Endothelial cell of umbilical vein (primary cell): ENCODE measurements at regions of chr6 and their contacts with region 1.

Region 1: GRCh38 chr6:130020907-130021629 is 2.7 kb downstream of the L3MBTL3 start:
- DNase-seq: peak; percentile 93
- H3K4me3 ChIP-seq: peak overlapping the region; percentile 80 to 87 (median 84)
- H3K27ac ChIP-seq: peak overlapping the region; percentile 79
- H3K4me1 ChIP-seq: peaks cover 17% of the 10 kb centered on the region
- H3K27me3 ChIP-seq: no peaks in the 10 kb centered on the region
- CTCF ChIP-seq: peak; percentile 80 to 82
- POLR2A ChIP-seq: no peak

Region 2: DNA sequence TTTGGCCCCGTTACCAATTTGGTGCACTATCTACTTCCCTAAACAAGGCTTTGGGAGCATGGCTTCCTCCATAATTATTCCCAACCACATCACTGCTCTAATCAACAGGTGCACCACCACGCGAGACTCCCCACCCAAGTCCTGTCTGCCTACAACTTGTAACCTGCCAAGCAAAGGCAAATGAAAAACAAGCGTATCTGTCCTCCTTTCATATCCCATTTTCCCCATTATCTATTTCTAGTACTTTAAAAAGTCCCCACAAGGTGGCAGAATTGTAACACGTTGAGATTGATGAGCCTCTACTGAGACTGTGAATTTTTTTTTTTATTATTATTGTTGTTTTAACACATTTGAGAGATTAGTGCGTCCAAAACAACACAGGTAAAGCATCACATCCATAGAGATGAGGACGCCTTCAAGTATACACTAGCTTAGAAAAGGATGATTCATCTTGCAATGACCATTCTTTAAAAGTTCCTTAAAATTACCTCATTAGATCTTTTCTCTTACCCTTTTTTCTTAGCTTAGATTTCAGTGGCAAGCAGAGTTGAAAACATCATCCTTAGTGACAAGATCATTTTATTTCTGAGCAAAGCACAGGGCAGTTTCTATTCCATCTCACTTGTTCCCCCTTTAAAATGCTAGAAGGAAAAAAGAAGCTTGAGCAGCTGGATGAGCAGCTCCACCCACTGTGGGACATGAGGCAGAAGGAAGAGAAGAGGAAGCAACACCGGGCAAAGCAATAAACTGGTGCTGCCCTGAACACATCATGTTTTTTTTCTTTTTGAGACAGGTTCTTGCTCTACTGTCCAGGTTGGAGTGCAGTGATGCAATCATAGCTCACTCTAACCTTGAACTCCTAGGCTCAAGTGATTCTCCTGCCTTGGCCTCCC is 521.9 kb before region 1 on chr6:
- CTCF ChIA-PET with region 1: interaction called, 29 read pairs
- POLR2A ChIA-PET with region 1: interaction called, 11 read pairs
- dilution Hi-C with region 1: no loop called
- intact Hi-C with region 1: loop called (anchors 2 kb)
- DNase-seq: peak; percentile 73
- H3K4me3 ChIP-seq: peak overlapping the region in 1 of 3 experiments; percentile 13
- H3K27ac ChIP-seq: no peak overlapping the region
- H3K4me1 ChIP-seq: peaks cover 34% of the 10 kb centered on the region
- H3K27me3 ChIP-seq: no peaks in the 10 kb centered on the region
- CTCF ChIP-seq: peak; percentile 21 to 36
- POLR2A ChIP-seq: no peak

Region 3: DNA sequence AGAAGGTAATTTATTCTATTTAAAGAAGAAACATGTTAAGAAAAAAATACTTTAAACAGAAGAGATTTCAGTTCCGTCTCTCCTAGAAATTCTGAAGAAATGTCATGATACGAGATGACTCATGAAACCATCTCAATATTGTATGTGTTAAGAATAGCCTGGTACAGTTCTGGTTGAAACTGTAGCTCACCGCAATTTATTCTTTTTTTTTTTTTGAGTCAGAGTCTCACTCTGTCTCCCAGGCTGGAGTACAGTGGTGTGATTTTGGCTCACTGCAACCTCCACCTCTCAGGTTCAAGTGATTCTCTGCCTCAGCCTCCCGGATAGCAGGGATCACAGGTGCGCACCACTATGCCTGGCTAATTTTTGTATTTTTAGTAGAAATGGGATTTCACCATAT is 414.4 kb before region 1 on chr6:
- CTCF ChIA-PET with region 1: interaction called, 10 read pairs
- POLR2A ChIA-PET with region 1: no interaction called
- dilution Hi-C with region 1: no loop called
- intact Hi-C with region 1: no loop called
- DNase-seq: no peak
- H3K4me3 ChIP-seq: no peak overlapping the region
- H3K27ac ChIP-seq: no peak overlapping the region
- H3K4me1 ChIP-seq: no peaks in the 10 kb centered on the region
- H3K27me3 ChIP-seq: no peaks in the 10 kb centered on the region
- CTCF ChIP-seq: no peak
- POLR2A ChIP-seq: no peak

Region 4: GRCh38 chr6:129683601-129684322 is 337.3 kb before region 1 on chr6:
- CTCF ChIA-PET with region 1: interaction called, 10 read pairs
- POLR2A ChIA-PET with region 1: no interaction called
- dilution Hi-C with region 1: no loop called
- intact Hi-C with region 1: no loop called
- DNase-seq: peak; percentile 97
- H3K4me3 ChIP-seq: peak overlapping the region in 1 of 3 experiments; percentile 6
- H3K27ac ChIP-seq: peak overlapping the region; percentile 98
- H3K4me1 ChIP-seq: peaks cover 77% of the 10 kb centered on the region
- H3K27me3 ChIP-seq: no peaks in the 10 kb centered on the region
- CTCF ChIP-seq: no peak
- POLR2A ChIP-seq: peak; percentile 82

Region 5: DNA sequence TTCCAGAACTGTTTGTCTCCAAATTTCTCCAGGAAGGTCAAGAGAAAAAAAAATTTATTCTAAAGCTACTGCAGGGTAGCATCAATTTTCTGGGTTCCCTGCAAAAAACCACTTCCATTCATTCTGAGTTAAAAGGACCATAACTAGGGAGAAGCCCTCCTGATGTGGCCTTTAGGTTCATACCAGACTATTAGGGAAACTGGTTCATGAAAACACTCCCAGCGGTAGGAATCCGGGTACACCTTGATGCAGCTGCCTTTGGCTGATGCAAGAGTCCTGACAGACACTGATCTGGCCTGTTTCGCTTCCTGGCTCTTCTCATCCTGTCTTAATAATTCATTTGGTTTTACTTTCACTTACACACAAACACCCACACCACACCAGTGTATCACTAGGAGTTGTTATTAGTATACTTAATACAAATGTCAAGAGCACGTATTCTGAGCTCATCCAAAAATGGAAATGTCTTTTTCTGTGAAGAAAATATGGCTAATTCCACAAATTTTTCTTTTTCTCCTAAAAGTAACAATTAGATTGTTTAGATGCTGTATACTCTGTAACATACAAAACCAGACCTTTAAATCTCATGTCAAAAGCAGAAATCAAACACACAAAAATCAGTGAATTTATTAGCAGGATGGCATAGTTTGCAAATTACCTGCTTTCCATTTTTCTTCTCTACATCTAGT is 272.7 kb before region 1 on chr6:
- CTCF ChIA-PET with region 1: interaction called, 9 read pairs
- POLR2A ChIA-PET with region 1: no interaction called
- dilution Hi-C with region 1: no loop called
- intact Hi-C with region 1: loop called (anchors 1 kb)
- DNase-seq: peak; percentile 28
- H3K4me3 ChIP-seq: no peak overlapping the region
- H3K27ac ChIP-seq: peak overlapping the region; percentile 80
- H3K4me1 ChIP-seq: peaks cover 53% of the 10 kb centered on the region
- H3K27me3 ChIP-seq: no peaks in the 10 kb centered on the region
- CTCF ChIP-seq: no peak
- POLR2A ChIP-seq: no peak

Region 6: DNA sequence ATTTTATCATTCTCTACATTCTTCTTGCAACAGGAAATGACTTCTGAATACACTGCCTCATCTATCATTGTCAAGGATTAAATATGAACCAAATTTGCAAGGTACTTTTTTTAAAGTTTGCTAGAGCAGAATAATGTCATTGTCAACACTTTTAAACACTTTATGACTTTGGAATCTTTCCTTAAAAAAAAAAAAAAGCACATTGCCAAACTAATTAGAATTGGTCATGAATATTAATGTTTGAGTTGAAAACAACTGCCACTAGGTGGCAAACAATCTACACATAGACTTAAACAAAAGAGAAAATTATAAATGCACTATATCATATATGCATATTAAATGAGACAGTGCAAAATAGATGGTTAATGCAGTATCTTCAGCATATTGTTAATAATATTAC is 127.4 kb before region 1 on chr6:
- CTCF ChIA-PET with region 1: interaction called, 21 read pairs
- POLR2A ChIA-PET with region 1: no interaction called
- dilution Hi-C with region 1: no loop called
- intact Hi-C with region 1: loop called (anchors 1 kb)
- DNase-seq: peak; percentile 58
- H3K4me3 ChIP-seq: no peak overlapping the region
- H3K27ac ChIP-seq: no peak overlapping the region
- H3K4me1 ChIP-seq: peaks cover 20% of the 10 kb centered on the region
- H3K27me3 ChIP-seq: no peaks in the 10 kb centered on the region
- CTCF ChIP-seq: peak; percentile 23 to 24
- POLR2A ChIP-seq: no peak

Region 7: GRCh38 chr6:129946439-129947145 is 74.5 kb before region 1 on chr6:
- CTCF ChIA-PET with region 1: interaction called, 11 read pairs
- POLR2A ChIA-PET with region 1: no interaction called
- dilution Hi-C with region 1: no loop called
- intact Hi-C with region 1: no loop called
- DNase-seq: no peak
- H3K4me3 ChIP-seq: no peak overlapping the region
- H3K27ac ChIP-seq: no peak overlapping the region
- H3K4me1 ChIP-seq: no peaks in the 10 kb centered on the region
- H3K27me3 ChIP-seq: no peaks in the 10 kb centered on the region
- CTCF ChIP-seq: no peak
- POLR2A ChIP-seq: no peak

Region 8: GRCh38 chr6:130307752-130308361 is 286.8 kb after region 1 on chr6:
- CTCF ChIA-PET with region 1: no interaction called
- POLR2A ChIA-PET with region 1: no interaction called
- dilution Hi-C with region 1: no loop called
- intact Hi-C with region 1: no loop called
- DNase-seq: no peak
- H3K4me3 ChIP-seq: no peak overlapping the region
- H3K27ac ChIP-seq: no peak overlapping the region
- H3K4me1 ChIP-seq: no peaks in the 10 kb centered on the region
- H3K27me3 ChIP-seq: no peaks in the 10 kb centered on the region
- CTCF ChIP-seq: no peak
- POLR2A ChIP-seq: no peak

Region 9: DNA sequence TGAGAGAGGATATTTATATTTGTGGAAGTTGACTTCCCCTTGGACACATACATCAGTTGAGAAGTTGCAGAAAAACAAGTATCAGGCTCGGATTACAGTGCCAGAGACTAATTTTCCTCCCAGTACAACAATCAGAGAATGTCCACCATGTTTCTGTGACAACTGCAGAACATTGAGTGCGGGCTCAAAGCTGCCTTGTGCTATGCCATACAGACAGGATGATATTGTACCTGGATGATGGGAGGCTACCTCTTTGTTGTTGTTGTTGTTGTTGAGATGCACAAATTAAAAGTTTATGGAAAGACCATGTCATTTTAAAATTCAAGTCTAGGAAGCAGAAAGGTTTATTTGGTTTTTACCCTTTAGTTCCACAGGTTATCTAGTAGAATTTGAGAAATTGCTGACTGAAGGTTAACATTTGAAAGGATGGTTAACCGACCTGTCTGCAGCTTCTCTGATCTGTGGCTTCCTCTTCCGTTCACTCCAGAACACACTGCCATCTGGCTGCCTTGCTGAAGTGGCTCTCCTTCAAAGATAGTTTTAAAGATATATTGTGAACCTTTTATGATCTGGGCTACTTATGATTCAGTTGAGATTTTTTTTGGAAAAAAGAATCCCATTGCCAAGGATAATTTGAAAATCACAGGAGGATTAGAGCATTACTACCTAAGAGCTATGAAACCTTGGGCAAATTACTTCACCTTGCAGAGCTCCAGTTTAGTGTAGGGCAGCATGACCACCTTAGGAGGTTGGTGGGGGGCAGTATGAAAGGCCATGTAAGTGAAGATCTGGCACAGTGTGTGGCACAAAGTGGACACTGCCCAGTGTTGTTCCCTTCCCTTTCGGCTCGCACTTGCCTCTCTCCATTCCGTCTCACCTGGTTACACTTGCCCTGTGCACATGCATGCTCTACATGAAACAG is 360.7 kb after region 1 on chr6:
- CTCF ChIA-PET with region 1: no interaction called
- POLR2A ChIA-PET with region 1: no interaction called
- dilution Hi-C with region 1: no loop called
- intact Hi-C with region 1: no loop called
- DNase-seq: no peak
- H3K4me3 ChIP-seq: no peak overlapping the region
- H3K27ac ChIP-seq: no peak overlapping the region
- H3K4me1 ChIP-seq: no peaks in the 10 kb centered on the region
- H3K27me3 ChIP-seq: no peaks in the 10 kb centered on the region
- CTCF ChIP-seq: no peak
- POLR2A ChIP-seq: no peak